ENCODE measurements at regions of chr7 and their contacts with region 1.

Region 1: DNA sequence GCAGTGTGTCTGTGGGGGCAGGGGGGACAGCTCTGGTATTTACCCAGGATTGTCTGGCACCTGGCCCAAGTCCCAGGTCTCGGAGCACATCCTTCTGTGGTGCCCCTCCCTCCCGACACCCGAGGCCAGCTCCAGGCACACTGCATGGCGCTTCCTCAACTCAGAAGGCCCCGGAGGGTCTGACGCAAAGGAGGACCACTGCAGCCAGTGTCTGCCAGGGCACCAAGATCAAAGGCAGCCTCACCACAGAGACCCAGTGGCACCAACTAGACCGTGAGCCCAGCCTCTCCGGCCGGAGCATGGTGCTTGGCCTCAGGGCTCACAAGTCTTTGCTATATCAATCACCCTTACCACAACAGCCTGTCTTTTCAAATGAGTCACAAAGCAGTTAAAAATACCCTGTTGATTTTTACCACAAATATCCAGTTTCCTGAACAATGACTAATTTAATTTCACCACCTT is 99.3 kb upstream of the DDC start:
- DNase-seq: no peak
- H3K4me3 Mint-ChIP-seq: no peak overlapping the region
- H3K27ac Mint-ChIP-seq: no peak overlapping the region
- H3K4me1 Mint-ChIP-seq: peaks cover 58% of the 10 kb centered on the region
- H3K27me3 Mint-ChIP-seq: peaks cover 3% of the 10 kb centered on the region

Region 2: GRCh38 chr7:50595491-50596102 is 68.9 kb before region 1 on chr7:
- intact Hi-C with region 1: loop called (anchors 2 kb)
- DNase-seq: no peak
- H3K4me3 Mint-ChIP-seq: no peak overlapping the region
- H3K27ac Mint-ChIP-seq: no peak overlapping the region
- H3K4me1 Mint-ChIP-seq: peaks cover 20% of the 10 kb centered on the region
- H3K27me3 Mint-ChIP-seq: peaks cover 15% of the 10 kb centered on the region

Region 3: GRCh38 chr7:50610521-50611277 is 53.8 kb before region 1 on chr7:
- intact Hi-C with region 1: loop called (anchors 1 kb)
- DNase-seq: peak; percentile 34
- H3K4me3 Mint-ChIP-seq: no peak overlapping the region
- H3K27ac Mint-ChIP-seq: no peak overlapping the region
- H3K4me1 Mint-ChIP-seq: peaks cover 37% of the 10 kb centered on the region
- H3K27me3 Mint-ChIP-seq: peaks cover 18% of the 10 kb centered on the region

Region 4: GRCh38 chr7:50739744-50740435 is 75.4 kb after region 1 on chr7:
- intact Hi-C with region 1: loop called (anchors 2 kb)
- DNase-seq: peak; percentile 63
- H3K4me3 Mint-ChIP-seq: peak overlapping the region; percentile 16
- H3K27ac Mint-ChIP-seq: peak overlapping the region; percentile 37
- H3K4me1 Mint-ChIP-seq: peaks cover 10% of the 10 kb centered on the region
- H3K27me3 Mint-ChIP-seq: no peaks in the 10 kb centered on the region

Region 5: GRCh38 chr7:50832744-50833143 is 168.3 kb after region 1 on chr7:
- intact Hi-C with region 1: loop called (anchors 2 kb)
- DNase-seq: peak; percentile 42
- H3K4me3 Mint-ChIP-seq: peak overlapping the region; percentile 45
- H3K27ac Mint-ChIP-seq: peak overlapping the region; percentile 30
- H3K4me1 Mint-ChIP-seq: peaks cover 45% of the 10 kb centered on the region
- H3K27me3 Mint-ChIP-seq: peaks cover 21% of the 10 kb centered on the region

Measured in activated T-helper 1 cell treated with anti-CD3 and anti-CD28 coated beads, Interleukin-12 subunit alpha, Interleukin-12 subunit beta, Interleukin-2, Interleukin-4 antibody, amounts not matched to agents 30 ng/mL and 10 ng/mL and 1 ng/mL, durations not matched to agents 14 hours and 24 hours and 36 hours (primary cell).